ENCODE measurements at regions of chr7 and their contacts with region 1.

Region 1: DNA sequence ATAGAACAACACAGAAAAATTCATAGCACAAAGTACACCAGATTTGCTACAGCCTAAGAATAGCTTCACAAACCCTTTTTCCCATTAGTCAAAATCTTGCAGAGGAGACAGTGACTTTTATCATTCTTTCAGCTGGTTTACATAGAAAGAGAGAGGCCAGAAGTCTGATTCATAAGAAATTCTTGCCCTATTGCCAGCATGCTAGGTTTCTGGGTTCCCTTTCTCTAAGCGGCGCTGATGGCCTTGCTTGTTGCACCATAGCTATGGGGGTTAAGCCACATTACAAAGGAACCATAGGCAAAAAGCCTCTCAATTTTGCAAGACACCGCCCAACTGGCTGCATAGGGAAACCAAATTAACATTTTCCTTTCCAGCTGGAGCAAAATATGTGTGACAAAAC is 87.4 kb downstream of the ZNF467 start:
- DNase-seq: no peak
- H3K4me3 ChIP-seq: no peak overlapping the region
- H3K27ac ChIP-seq: no peak overlapping the region
- H3K27me3 ChIP-seq: peaks cover 9% of the 10 kb centered on the region
- CTCF ChIP-seq: no peak

Region 2: GRCh38 chr7:149662591-149663095 is 23.4 kb before region 1 on chr7:
- CTCF ChIA-PET with region 1: interaction called, 10 read pairs
- POLR2A ChIA-PET with region 1: no interaction called
- DNase-seq: no peak
- H3K4me3 ChIP-seq: no peak overlapping the region
- H3K27ac ChIP-seq: no peak overlapping the region
- H3K27me3 ChIP-seq: peaks cover 2% of the 10 kb centered on the region
- CTCF ChIP-seq: peak; percentile 56